Panc1 (cell line): ENCODE measurements at regions of chr9 and their contacts with region 1.

Region 1: GRCh38 chr9:29198861-29199260 is 1625.6 kb upstream of the C9orf72 start:
- DNase-seq: no peak
- ATAC-seq: no peak
- H3K4me3 ChIP-seq: no peak overlapping the region
- H3K27ac ChIP-seq: no peak overlapping the region
- H3K4me1 ChIP-seq: no peaks in the 10 kb centered on the region
- H3K27me3 ChIP-seq: no peaks in the 10 kb centered on the region
- CTCF ChIP-seq: no peak

Region 2: GRCh38 chr9:28234894-28235277 is 964.0 kb before region 1 on chr9:
- CTCF ChIA-PET with region 1: no interaction called
- POLR2A ChIA-PET with region 1: interaction called, 11 read pairs
- in situ Hi-C with region 1: no loop called
- intact Hi-C with region 1: no loop called
- DNase-seq: no peak
- ATAC-seq: no peak
- H3K4me3 ChIP-seq: no peak overlapping the region
- H3K27ac ChIP-seq: no peak overlapping the region
- H3K4me1 ChIP-seq: no peaks in the 10 kb centered on the region
- H3K27me3 ChIP-seq: no peaks in the 10 kb centered on the region
- CTCF ChIP-seq: no peak

Region 3: GRCh38 chr9:28365020-28365640 is 833.7 kb before region 1 on chr9:
- CTCF ChIA-PET with region 1: no interaction called
- POLR2A ChIA-PET with region 1: no interaction called
- in situ Hi-C with region 1: no loop called
- intact Hi-C with region 1: no loop called
- DNase-seq: no peak
- ATAC-seq: no peak
- H3K4me3 ChIP-seq: no peak overlapping the region
- H3K27ac ChIP-seq: no peak overlapping the region
- H3K4me1 ChIP-seq: no peaks in the 10 kb centered on the region
- H3K27me3 ChIP-seq: no peaks in the 10 kb centered on the region
- CTCF ChIP-seq: no peak

Region 4: DNA sequence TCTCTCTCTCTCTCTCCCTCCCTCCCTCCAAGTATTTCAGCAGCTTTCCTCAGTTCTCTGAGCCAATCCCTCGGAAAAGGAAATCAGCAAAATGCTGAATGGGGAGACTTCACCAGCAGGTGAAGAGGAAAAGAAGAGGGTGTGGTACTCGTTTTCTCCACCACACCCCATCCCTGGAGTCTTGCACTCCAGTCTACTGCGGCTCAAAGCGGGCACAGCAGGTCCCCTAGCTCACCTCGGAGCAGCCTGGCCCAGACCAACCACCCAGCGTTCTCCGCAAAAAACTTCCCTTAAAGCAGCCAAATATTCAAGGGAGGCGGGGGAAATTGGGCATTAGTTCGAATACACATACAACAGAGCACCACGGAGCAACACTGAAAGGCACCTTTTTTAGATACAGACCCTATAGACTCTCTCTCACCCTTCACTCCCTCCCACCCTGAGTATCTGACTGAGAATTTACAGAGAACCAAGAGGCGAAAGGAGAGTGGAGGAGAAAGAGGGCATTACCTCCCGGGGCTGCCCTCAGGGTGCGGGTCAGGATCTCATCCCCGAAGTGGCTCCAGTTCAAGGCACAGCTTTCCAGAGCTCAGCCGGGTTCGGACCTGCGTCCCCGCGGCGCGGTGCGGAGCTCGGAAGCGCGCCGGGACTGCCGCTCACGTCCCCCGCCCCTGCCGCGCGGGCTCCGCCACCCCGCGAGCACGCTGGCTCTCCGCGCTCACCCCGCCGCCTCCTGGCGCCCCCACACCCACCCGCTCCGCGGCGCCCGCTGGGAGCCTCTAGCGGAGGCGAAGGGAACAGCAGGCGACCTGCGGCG is 12.9 kb after region 1 on chr9:
- CTCF ChIA-PET with region 1: no interaction called
- POLR2A ChIA-PET with region 1: no interaction called
- in situ Hi-C with region 1: no loop called
- intact Hi-C with region 1: no loop called
- DNase-seq: no peak
- ATAC-seq: no peak
- H3K4me3 ChIP-seq: peak overlapping the region in 1 of 2 experiments; percentile 45; a peak in 1 of 4 replicates
- H3K27ac ChIP-seq: no peak overlapping the region
- H3K4me1 ChIP-seq: peaks cover 14% of the 10 kb centered on the region
- H3K27me3 ChIP-seq: peaks cover 34% of the 10 kb centered on the region
- CTCF ChIP-seq: peak; percentile 54